ENCODE measurements at regions of chr9 and their contacts with region 1.

Region 1: DNA sequence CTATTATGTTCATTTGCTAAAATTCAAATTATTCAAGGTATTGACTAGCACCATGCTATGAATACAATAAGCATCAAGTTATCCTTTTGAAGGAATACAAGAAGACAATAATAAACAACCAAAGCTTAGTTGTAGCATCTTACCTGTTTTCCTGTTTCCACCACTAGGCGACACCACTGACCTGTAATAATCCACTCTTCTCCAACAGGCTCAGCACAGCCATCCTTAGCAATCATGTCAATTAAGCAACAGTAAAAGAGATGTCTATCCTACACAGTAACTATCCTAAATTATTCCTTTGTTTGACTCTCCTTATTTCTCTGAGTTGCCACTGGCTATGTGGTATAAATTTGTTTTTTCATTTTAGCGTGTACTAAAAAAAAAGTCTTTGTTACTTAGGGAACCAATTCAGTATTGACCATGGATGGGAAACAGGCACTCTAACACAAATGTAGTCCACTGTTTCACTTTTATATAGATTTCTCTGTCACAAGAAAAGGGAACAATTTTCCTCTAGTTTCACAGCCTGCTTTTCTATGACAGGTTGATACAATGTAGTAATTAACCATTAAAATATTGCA is 46.2 kb downstream of the PCA3 start:
- DNase-seq: no peak
- ATAC-seq: peak in 3 of 4 donors; percentile 57 to 82 (median 66)
- H3K4me3 ChIP-seq: no peak overlapping the region
- H3K27ac ChIP-seq: peak overlapping the region in 1 of 12 donors; percentile 17
- H3K4me1 ChIP-seq: no peaks in the 10 kb centered on the region
- H3K27me3 ChIP-seq: peaks cover 0 to 17% (median 0%) of the 10 kb centered on the region in 9 donors
- CTCF ChIP-seq: peak; percentile 43 to 79 (median 68)
- POLR2A ChIP-seq: no peak

Region 2: GRCh38 chr9:76756268-76756640 is 54.2 kb before region 1 on chr9:
- intact Hi-C with region 1: no loop called
- DNase-seq: no peak
- ATAC-seq: peak in 1 of 4 donors; percentile 41
- H3K4me3 ChIP-seq: no peak overlapping the region
- H3K27ac ChIP-seq: no peak overlapping the region
- H3K4me1 ChIP-seq: no peaks in the 10 kb centered on the region
- H3K27me3 ChIP-seq: peaks cover 0 to 7% (median 0%) of the 10 kb centered on the region in 9 donors
- CTCF ChIP-seq: peak in 2 of 12 donors; percentile 4 to 7
- POLR2A ChIP-seq: no peak

Region 3: DNA sequence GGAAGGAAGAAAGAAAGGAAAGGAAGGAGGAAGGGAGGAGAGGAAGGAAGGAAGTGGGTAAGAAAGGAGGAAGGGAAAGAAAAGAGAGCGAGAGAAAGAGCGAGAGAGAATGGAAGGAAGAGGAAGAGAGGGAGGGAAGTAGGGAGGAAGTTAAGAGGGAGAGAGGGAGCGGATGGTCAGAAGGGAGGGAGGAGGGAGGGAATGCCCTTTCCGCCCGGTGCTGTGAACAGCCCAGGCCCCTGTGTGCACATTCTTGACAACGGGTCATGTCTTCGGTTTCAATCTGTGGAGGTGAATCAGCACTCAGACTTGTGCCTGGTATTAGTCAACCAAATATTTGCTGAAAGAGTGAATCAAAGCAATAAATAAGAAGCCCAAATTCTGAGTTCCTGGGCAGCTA is 56.2 kb after region 1 on chr9:
- intact Hi-C with region 1: loop called in 1 of 10 experiments (anchors 10 kb)
- DNase-seq: no peak
- ATAC-seq: no peak
- H3K4me3 ChIP-seq: no peak overlapping the region
- H3K27ac ChIP-seq: peak overlapping the region in 1 of 12 donors; percentile 73
- H3K4me1 ChIP-seq: no peaks in the 10 kb centered on the region
- H3K27me3 ChIP-seq: peaks cover 0 to 22% (median 0%) of the 10 kb centered on the region in 9 donors
- CTCF ChIP-seq: no peak
- POLR2A ChIP-seq: no peak

Region 4: GRCh38 chr9:76987594-76988200 is 177.2 kb after region 1 on chr9:
- intact Hi-C with region 1: loop called in 3 of 10 experiments (anchors 5 to 10 kb)
- DNase-seq: no peak
- ATAC-seq: no peak
- H3K4me3 ChIP-seq: no peak overlapping the region
- H3K27ac ChIP-seq: no peak overlapping the region
- H3K4me1 ChIP-seq: no peaks in the 10 kb centered on the region
- H3K27me3 ChIP-seq: peaks cover 0 to 33% (median 8%) of the 10 kb centered on the region in 9 donors
- CTCF ChIP-seq: peak in 5 of 12 donors; percentile 8 to 26 (median 11)
- POLR2A ChIP-seq: no peak

Region 5: GRCh38 chr9:76996700-76997099 is 186.2 kb after region 1 on chr9:
- intact Hi-C with region 1: loop called (anchors 1 to 10 kb)
- DNase-seq: peak in 3 of 5 donors; percentile 33 to 63 (median 35)
- ATAC-seq: peak; percentile 75 to 95 (median 85)
- H3K4me3 ChIP-seq: no peak overlapping the region
- H3K27ac ChIP-seq: no peak overlapping the region
- H3K4me1 ChIP-seq: no peaks in the 10 kb centered on the region
- H3K27me3 ChIP-seq: peaks cover 0 to 5% (median 0%) of the 10 kb centered on the region in 9 donors
- CTCF ChIP-seq: peak; percentile 14 to 62 (median 36)
- POLR2A ChIP-seq: no peak

Region 6: DNA sequence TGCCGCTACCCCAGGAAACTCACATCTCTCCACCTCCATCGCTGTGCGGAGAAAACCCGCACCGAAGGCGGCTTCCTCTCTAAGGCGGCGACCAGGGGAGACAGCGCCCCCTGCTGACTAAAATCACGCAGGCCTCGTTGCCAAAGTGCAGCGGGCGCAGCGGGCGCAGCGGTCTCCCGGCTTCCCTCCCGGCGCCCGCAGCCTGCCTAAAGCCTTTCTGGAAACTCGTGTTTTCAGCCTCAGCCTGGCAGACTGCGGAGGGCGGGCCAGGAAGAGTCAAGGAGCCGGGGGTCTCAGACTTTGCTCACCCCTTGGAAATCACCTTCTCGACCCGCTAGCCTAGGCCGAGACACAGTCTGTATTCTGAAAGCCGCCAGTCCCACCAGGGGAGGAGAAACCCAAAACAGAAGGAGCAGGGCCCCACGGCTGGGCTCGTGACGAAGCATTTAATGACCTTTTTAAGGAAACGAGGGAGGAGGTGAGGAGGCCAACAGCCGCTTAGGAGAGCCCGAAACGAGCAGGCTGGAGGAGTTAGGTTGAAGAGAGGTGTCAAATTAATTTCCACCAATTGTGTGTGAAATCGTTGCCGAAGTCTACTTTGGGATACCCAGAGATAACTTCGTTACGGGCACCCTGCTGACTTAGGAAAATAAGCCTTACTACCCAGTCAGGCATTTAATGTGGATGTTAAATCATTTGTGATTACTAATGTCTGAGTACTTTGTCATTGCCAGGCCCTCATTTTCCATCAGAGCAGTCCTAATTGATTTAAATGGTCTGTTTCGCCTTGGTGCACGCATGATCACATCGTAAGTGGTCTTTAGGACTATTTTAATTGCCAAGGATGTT is 201.7 kb after region 1 on chr9:
- intact Hi-C with region 1: loop called in 5 of 10 experiments (anchors 5 kb)
- DNase-seq: peak in 3 of 5 donors; percentile 45 to 75 (median 53)
- ATAC-seq: peak in 3 of 4 donors; percentile 42 to 66 (median 55)
- H3K4me3 ChIP-seq: peak overlapping the region in 4 of 12 donors; percentile 1 to 21 (median 8)
- H3K27ac ChIP-seq: no peak overlapping the region
- H3K4me1 ChIP-seq: peaks cover 0 to 38% (median 13%) of the 10 kb centered on the region in 12 donors
- H3K27me3 ChIP-seq: peaks cover 63 to 100% (median 86%) of the 10 kb centered on the region in 9 donors
- CTCF ChIP-seq: peak; percentile 56 to 85 (median 74)
- POLR2A ChIP-seq: no peak

Region 7: GRCh38 chr9:77149879-77150278 is 339.4 kb after region 1 on chr9:
- intact Hi-C with region 1: loop called in 9 of 10 experiments (anchors 2 to 5 kb)
- DNase-seq: no peak
- ATAC-seq: no peak
- H3K4me3 ChIP-seq: no peak overlapping the region
- H3K27ac ChIP-seq: no peak overlapping the region
- H3K4me1 ChIP-seq: no peaks in the 10 kb centered on the region
- H3K27me3 ChIP-seq: peaks cover 0 to 2% (median 0%) of the 10 kb centered on the region in 9 donors
- CTCF ChIP-seq: no peak
- POLR2A ChIP-seq: no peak

Measured in heart left ventricle (tissue), 16 donors.